Activated CD4-positive, alpha-beta T cell treated with anti-CD3 and anti-CD28 coated beads for 36 hours (primary cell): ENCODE measurements at regions of chr12 and their contacts with region 1.

Region 1: DNA sequence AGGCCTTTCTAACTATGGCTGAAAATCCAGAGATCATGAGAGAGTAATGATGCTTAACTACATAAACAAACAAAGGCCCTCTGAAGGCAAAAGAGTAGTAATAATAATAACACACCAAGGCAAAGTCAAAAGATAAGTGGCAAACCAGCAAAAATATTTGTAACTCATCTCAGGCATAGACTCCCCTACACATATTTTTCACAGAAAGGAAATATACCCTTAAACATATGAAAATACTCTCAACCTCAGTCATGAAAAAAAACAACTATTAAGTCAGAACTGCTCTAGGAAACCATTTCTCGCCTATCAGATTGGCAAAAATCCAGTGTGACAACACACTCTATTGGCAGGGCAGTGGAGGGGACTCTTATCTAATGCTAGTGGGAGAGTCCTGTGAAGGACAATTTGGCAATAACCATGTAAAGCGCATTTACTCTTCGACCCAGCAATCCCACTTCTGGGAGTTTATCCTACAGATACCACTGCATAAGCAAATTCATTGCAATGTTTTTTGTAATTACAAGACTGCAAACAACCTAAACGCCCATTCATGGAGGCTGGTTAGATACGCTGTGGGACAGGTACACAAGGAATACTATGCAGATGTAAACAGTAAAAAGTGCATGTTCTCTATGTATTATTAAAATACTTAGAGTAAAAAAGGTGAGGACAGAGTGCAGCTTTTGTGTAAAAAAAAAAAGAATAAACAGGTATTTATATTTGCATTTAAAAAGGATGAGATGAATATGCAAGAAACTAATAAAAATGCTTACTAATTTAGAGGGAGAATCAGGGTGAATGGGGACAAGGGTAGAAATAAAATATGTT is 26.0 kb upstream of the IL22 start:
- DNase-seq: no peak
- ATAC-seq: no peak
- H3K4me3 Mint-ChIP-seq: no peak overlapping the region
- H3K27ac Mint-ChIP-seq: no peak overlapping the region
- H3K4me1 Mint-ChIP-seq: peaks cover 33% of the 10 kb centered on the region
- H3K27me3 Mint-ChIP-seq: peaks cover 22% of the 10 kb centered on the region

Region 2: GRCh38 chr12:67457778-67458177 is 821.7 kb before region 1 on chr12:
- CTCF ChIA-PET with region 1: no interaction called
- POLR2A ChIA-PET with region 1: no interaction called
- intact Hi-C with region 1: loop called in 1 of 2 experiments (anchors 10 kb)
- DNase-seq: no peak
- ATAC-seq: no peak
- H3K4me3 Mint-ChIP-seq: no peak overlapping the region
- H3K27ac Mint-ChIP-seq: no peak overlapping the region
- H3K4me1 Mint-ChIP-seq: peaks cover 5% of the 10 kb centered on the region
- H3K27me3 Mint-ChIP-seq: peaks cover 16% of the 10 kb centered on the region

Region 3: GRCh38 chr12:68189821-68190242 is 89.6 kb before region 1 on chr12:
- CTCF ChIA-PET with region 1: no interaction called
- POLR2A ChIA-PET with region 1: no interaction called
- intact Hi-C with region 1: loop called in 1 of 2 experiments (anchors 5 kb)
- DNase-seq: peak; percentile 61
- ATAC-seq: peak; percentile 89
- H3K4me3 Mint-ChIP-seq: no peak overlapping the region
- H3K27ac Mint-ChIP-seq: peak overlapping the region; percentile 24
- H3K4me1 Mint-ChIP-seq: peaks cover 11% of the 10 kb centered on the region
- H3K27me3 Mint-ChIP-seq: peaks cover 13% of the 10 kb centered on the region

Region 4: DNA sequence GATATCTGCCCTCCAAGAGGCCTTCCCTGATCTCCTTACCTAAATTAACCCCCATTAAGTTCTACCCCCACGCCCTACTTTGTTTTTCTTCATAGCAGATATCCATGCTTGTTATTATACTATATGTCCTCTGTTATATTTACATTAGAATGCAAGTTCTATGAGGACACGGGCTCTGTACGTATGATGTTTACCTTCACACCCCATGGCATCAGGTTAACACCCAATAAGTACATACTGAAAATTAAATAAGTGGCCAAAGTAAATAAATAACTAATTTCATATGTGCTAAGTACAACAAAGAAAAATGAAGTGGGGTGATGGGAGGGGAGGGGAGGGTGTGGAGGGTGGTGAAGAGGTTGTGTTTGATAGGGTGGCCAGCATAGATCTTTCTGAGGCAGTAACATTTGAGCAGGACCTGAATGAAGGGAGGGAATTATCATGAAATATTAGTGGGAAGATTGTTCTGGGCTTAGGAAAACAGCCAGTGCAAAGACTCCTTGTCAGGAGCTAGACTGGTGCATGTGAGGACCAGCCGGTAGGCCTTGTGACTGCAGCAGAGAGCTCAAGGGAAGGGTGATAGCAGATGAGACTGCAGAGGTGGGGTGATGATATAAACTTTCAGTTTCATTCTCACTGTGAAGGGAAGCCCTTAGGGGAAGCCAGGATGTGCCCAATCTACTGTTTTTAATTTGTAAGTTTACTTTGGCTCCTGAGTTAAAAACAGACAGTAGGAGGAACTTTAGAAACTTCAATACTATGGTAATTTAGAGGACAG is 38.7 kb before region 1 on chr12:
- CTCF ChIA-PET with region 1: interaction called, 3 read pairs
- POLR2A ChIA-PET with region 1: no interaction called
- intact Hi-C with region 1: loop called in 1 of 2 experiments (anchors 5 kb)
- DNase-seq: peak; percentile 73
- ATAC-seq: peak; percentile 97
- H3K4me3 Mint-ChIP-seq: peak overlapping the region; percentile 4
- H3K27ac Mint-ChIP-seq: peak overlapping the region; percentile 27
- H3K4me1 Mint-ChIP-seq: peaks cover 48% of the 10 kb centered on the region
- H3K27me3 Mint-ChIP-seq: peaks cover 2% of the 10 kb centered on the region

Region 5: GRCh38 chr12:68259318-68259940 is 20.0 kb before region 1 on chr12:
- CTCF ChIA-PET with region 1: interaction called, 3 read pairs
- POLR2A ChIA-PET with region 1: no interaction called
- intact Hi-C with region 1: loop called (anchors 1 to 2 kb)
- DNase-seq: peak; percentile 62
- ATAC-seq: peak; percentile 95
- H3K4me3 Mint-ChIP-seq: no peak overlapping the region
- H3K27ac Mint-ChIP-seq: peak overlapping the region; percentile 30
- H3K4me1 Mint-ChIP-seq: peaks cover 31% of the 10 kb centered on the region
- H3K27me3 Mint-ChIP-seq: peaks cover 35% of the 10 kb centered on the region